Mammary epithelial cell (primary cell): ENCODE measurements at regions of chr2 and their contacts with region 1.

Region 1: GRCh38 chr2:152861349-152861942 is 143.0 kb downstream of the ARL6IP6 start:
- DNase-seq: peak; percentile 14
- H3K4me3 ChIP-seq: no peak overlapping the region
- H3K27ac ChIP-seq: no peak overlapping the region
- H3K4me1 ChIP-seq: no peaks in the 10 kb centered on the region
- H3K27me3 ChIP-seq: no peaks in the 10 kb centered on the region
- CTCF ChIP-seq: peak; percentile 72 to 77

Region 2: DNA sequence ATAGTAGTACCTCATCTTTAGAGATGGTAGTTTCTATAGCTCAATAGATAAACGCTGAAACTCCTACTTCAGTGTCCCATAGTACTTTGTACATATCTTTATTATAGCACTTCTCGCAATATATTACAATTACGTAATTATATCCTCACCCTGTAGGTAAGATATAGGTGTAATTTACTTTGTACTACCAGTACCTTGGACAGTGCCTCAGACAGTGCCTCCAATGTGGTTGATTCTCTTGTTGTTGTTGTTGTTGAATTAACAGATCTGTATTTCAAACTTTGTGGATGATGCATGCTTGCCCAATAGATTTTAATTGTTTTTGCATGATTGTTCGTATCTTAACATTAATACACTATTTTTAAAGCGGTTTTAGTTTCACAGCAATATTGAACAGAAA is 45.6 kb after region 1 on chr2:
- CTCF ChIA-PET with region 1: no interaction called
- dilution Hi-C with region 1: loop called (anchors 5 kb)
- in situ Hi-C with region 1: no loop called
- intact Hi-C with region 1: no loop called
- DNase-seq: no peak
- H3K4me3 ChIP-seq: no peak overlapping the region
- H3K27ac ChIP-seq: no peak overlapping the region
- H3K4me1 ChIP-seq: no peaks in the 10 kb centered on the region
- H3K27me3 ChIP-seq: no peaks in the 10 kb centered on the region
- CTCF ChIP-seq: no peak

Region 3: GRCh38 chr2:154375579-154375931 is 1514.1 kb after region 1 on chr2:
- CTCF ChIA-PET with region 1: no interaction called
- dilution Hi-C with region 1: no loop called
- in situ Hi-C with region 1: no loop called
- intact Hi-C with region 1: loop called (anchors 5 kb)
- DNase-seq: peak; percentile 28
- H3K4me3 ChIP-seq: no peak overlapping the region
- H3K27ac ChIP-seq: no peak overlapping the region
- H3K4me1 ChIP-seq: no peaks in the 10 kb centered on the region
- H3K27me3 ChIP-seq: no peaks in the 10 kb centered on the region
- CTCF ChIP-seq: peak; percentile 31 to 52